ENCODE measurements at regions of chr10 and their contacts with region 1.

Region 1: GRCh38 chr10:47047671-47048525 is 136.7 kb downstream of the PTPN20 start:
- DNase-seq: peak; percentile 88
- ATAC-seq: peak; percentile 76
- H3K4me3 Mint-ChIP-seq: no peak overlapping the region
- H3K27ac Mint-ChIP-seq: peak overlapping the region; percentile 31
- H3K4me1 Mint-ChIP-seq: peaks cover 20% of the 10 kb centered on the region
- H3K27me3 Mint-ChIP-seq: no peaks in the 10 kb centered on the region
- CTCF ChIP-seq: peak; percentile 90

Region 2: DNA sequence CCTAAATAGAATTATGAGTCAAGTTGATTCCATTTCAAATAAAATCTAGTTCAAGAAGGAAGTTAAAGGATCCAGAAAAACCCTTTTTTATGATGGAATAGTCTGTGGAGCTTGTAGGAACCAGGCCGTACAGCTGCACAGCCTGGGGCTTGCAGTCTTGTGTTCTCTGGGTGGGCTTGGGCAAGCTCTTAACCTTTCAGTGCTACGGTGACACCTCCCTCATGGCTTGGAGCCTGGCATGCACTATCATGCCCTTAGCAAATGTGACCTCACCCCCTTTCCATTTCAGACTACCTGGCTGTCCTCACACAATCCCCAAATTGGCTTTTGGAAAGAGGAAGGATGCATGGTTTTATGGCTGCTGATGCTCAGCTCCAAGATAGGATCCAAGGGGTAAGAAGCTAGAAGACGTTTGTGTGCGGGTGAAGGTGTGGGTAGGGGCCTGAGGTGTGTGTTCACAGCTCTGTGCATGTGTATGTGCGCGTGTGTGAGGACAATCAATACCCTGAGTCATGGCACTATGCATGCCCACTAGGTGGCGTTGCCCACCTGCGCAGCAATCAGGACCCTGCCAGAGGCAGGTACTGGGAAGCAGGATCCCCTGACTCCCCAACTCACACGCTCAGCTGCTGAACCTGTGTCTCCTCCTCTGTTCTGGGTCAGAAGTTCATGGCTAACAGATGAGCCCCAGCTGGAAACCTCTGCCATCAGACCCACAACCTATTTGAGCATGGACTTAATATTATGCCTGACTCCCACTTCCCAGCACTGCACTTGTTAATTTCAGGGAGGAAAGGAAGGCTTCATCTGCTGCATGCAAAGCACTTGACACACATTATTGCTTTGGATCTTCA is 23.3 kb before region 1 on chr10:
- CTCF ChIA-PET with region 1: interaction called, 32 read pairs
- POLR2A ChIA-PET with region 1: no interaction called
- intact Hi-C with region 1: no loop called
- DNase-seq: peak; percentile 82
- ATAC-seq: peak; percentile 93
- H3K4me3 Mint-ChIP-seq: no peak overlapping the region
- H3K27ac Mint-ChIP-seq: no peak overlapping the region
- H3K4me1 Mint-ChIP-seq: peaks cover 2% of the 10 kb centered on the region
- H3K27me3 Mint-ChIP-seq: no peaks in the 10 kb centered on the region
- CTCF ChIP-seq: peak; percentile 86

Region 3: GRCh38 chr10:47071891-47072290 is 24.0 kb after region 1 on chr10:
- CTCF ChIA-PET with region 1: interaction called, 22 read pairs
- POLR2A ChIA-PET with region 1: no interaction called
- intact Hi-C with region 1: no loop called
- DNase-seq: no peak
- ATAC-seq: no peak
- H3K4me3 Mint-ChIP-seq: no peak overlapping the region
- H3K27ac Mint-ChIP-seq: no peak overlapping the region
- H3K4me1 Mint-ChIP-seq: peaks cover 10% of the 10 kb centered on the region
- H3K27me3 Mint-ChIP-seq: no peaks in the 10 kb centered on the region
- CTCF ChIP-seq: no peak

Region 4: GRCh38 chr10:47127188-47127785 is 79.4 kb after region 1 on chr10:
- CTCF ChIA-PET with region 1: no interaction called
- POLR2A ChIA-PET with region 1: no interaction called
- intact Hi-C with region 1: no loop called
- DNase-seq: no peak
- ATAC-seq: no peak
- H3K4me3 Mint-ChIP-seq: no peak overlapping the region
- H3K27ac Mint-ChIP-seq: peak overlapping the region; percentile 48
- H3K4me1 Mint-ChIP-seq: peaks cover 21% of the 10 kb centered on the region
- H3K27me3 Mint-ChIP-seq: no peaks in the 10 kb centered on the region
- CTCF ChIP-seq: no peak

Region 5: GRCh38 chr10:47165711-47166524 is 118.0 kb after region 1 on chr10:
- CTCF ChIA-PET with region 1: interaction called, 15 read pairs
- POLR2A ChIA-PET with region 1: no interaction called
- intact Hi-C with region 1: no loop called
- DNase-seq: peak; percentile 59
- ATAC-seq: peak; percentile 78
- H3K4me3 Mint-ChIP-seq: peak overlapping the region; percentile 69
- H3K27ac Mint-ChIP-seq: peak overlapping the region; percentile 89
- H3K4me1 Mint-ChIP-seq: peaks cover 34% of the 10 kb centered on the region
- H3K27me3 Mint-ChIP-seq: no peaks in the 10 kb centered on the region
- CTCF ChIP-seq: no peak

Region 6: DNA sequence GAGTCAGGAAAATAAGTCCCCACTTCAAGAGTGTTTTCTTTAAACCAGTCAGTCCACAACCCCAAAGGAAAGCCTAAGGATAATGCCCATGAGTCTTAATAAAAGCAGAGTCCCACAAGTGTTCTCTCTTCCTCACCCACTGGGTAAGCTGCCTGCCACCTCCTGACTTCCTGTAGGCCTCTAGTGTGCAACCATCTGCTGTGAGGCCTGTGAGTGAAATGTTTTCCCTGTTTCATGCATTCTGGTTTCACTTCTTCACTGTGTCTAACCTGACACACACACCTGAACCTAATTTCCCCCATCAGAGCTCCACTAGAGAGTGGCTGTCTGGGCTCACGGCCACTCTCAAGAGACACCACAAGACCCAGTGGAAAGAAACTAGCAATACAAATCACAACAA is 213.2 kb after region 1 on chr10:
- CTCF ChIA-PET with region 1: interaction called, 13 read pairs
- POLR2A ChIA-PET with region 1: no interaction called
- intact Hi-C with region 1: no loop called
- DNase-seq: peak; percentile 55
- ATAC-seq: peak; percentile 57
- H3K4me3 Mint-ChIP-seq: peak overlapping the region; percentile 44
- H3K27ac Mint-ChIP-seq: peak overlapping the region; percentile 93
- H3K4me1 Mint-ChIP-seq: peaks cover 93% of the 10 kb centered on the region
- H3K27me3 Mint-ChIP-seq: no peaks in the 10 kb centered on the region
- CTCF ChIP-seq: no peak

Region 7: DNA sequence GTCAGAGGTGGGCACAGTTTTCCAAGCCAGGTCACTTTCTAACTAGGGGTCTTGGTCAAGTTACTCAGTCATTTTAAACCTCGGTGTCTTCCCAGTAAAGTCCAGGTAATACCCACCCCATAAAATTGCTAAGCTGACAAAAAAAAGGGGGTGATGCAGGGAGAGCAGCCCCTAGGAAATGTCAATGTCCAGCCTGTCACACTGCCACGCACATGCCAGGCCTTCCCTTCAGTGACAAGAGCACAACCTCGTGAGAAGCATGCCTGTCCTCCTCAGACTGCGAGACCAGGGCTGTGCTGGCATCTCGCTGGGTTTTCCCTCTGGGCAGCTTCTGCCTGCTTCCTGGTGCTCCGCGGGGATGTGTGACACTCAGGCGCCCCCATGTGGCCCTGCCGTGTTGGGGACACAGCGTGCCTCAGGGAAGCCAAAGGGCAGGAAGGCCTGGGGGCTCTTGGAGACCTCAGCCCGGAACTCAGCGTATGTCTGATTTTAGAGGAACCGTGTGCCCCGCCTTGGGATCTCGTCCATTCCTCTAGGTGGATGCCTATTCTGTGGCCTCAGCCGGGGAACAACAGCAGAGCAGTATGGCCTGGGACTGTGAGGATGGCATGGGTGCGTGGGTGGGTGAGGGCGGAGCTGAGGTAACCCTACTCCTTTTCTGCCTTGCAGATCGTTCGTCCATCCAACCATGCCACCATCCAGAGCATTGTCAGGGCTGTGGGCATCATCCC is 264.2 kb after region 1 on chr10:
- CTCF ChIA-PET with region 1: interaction called, 204 read pairs
- POLR2A ChIA-PET with region 1: interaction called, 3 read pairs
- intact Hi-C with region 1: loop called (anchors 2 kb)
- DNase-seq: peak; percentile 92
- ATAC-seq: peak; percentile 90
- H3K4me3 Mint-ChIP-seq: no peak overlapping the region
- H3K27ac Mint-ChIP-seq: peak overlapping the region; percentile 72
- H3K4me1 Mint-ChIP-seq: peaks cover 20% of the 10 kb centered on the region
- H3K27me3 Mint-ChIP-seq: no peaks in the 10 kb centered on the region
- CTCF ChIP-seq: peak; percentile 97

Measured in activated CD8-positive, alpha-beta T cell treated with anti-CD3 and anti-CD28 coated beads for 36 hours (primary cell).